Lower leg skin (tissue), 4 donors: ENCODE measurements at regions of chr9 and their contacts with region 1.

Region 1: GRCh38 chr9:37464426-37465248 is 613 bp downstream of the ZBTB5 start:
- DNase-seq: peak; percentile 76 to 95
- H3K4me3 ChIP-seq: peak overlapping the region; percentile 73
- CTCF ChIP-seq: no peak
- POLR2A ChIP-seq: no peak

Region 2: DNA sequence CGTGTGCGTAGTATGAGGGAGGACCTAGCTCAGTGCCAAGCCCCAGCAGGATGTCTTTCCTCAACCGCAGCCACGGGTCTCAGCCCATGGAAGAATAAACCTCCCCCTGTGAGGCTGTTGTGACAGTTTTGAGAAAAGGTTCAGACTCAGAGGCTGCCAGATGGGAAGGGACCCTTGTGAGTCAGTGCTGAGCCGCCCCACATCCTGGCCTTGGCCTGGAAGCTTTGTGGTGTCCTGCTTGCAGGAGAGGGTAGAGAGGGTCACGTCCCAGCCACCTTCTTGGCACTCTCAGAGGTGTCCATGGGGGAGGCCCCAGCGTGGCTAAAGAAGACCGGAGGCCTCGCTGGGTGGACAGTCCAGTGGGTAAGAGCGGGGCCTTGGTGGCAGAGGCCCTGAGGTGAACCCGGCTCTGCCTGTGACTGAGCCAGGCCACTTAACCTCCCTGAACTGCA is 39.3 kb before region 1 on chr9:
- intact Hi-C with region 1: loop called (anchors 5 kb)
- DNase-seq: no peak
- H3K4me3 ChIP-seq: no peak overlapping the region
- CTCF ChIP-seq: no peak
- POLR2A ChIP-seq: no peak

Region 3: GRCh38 chr9:37540634-37541033 is 76.0 kb after region 1 on chr9:
- intact Hi-C with region 1: no loop called
- DNase-seq: peak in 1 of 2 donors; percentile 36
- H3K4me3 ChIP-seq: no peak overlapping the region
- CTCF ChIP-seq: no peak
- POLR2A ChIP-seq: no peak

Region 4: DNA sequence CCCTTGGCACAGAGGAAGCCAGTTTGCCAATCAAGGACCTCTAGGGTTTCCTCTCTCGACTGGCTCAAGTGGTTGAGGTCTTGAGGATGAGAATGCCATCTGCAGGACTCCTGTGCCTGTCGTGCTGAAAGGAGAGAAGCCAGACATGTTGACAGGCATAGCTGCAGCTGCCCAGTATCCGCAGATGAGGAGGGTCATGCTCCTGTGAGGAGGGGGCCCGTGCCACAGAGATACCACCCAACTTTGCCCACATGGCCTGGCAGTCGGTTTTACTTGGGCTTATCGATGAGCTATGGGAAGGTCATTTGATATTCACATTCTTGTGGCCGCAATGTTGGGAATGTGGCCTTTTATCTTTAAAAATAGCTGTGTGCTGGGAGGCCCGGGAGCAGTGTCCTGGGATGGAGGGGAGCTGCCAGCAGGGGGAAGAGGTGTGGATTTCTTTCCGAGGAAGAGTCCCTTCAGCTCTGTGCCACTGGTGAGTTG is 203.5 kb after region 1 on chr9:
- intact Hi-C with region 1: no loop called
- DNase-seq: no peak
- H3K4me3 ChIP-seq: no peak overlapping the region
- CTCF ChIP-seq: no peak
- POLR2A ChIP-seq: no peak

Region 5: GRCh38 chr9:38127271-38127882 is 662.7 kb after region 1 on chr9:
- intact Hi-C with region 1: no loop called
- DNase-seq: peak in 1 of 2 donors; percentile 14
- H3K4me3 ChIP-seq: no peak overlapping the region
- CTCF ChIP-seq: no peak
- POLR2A ChIP-seq: no peak